ENCODE measurements at regions of chr11 and their contacts with region 1.

Region 1: GRCh38 chr11:65888163-65888814 is at the start of gene FIBP:
- DNase-seq: peak; percentile 83
- ATAC-seq: peak; percentile 69
- H3K4me3 ChIP-seq: peak within 1 kb of the TSS; percentile 90
- H3K27ac ChIP-seq: peak within 1 kb of the TSS; percentile 84
- H3K4me1 ChIP-seq: peaks cover 29% of the 10 kb centered on the region
- H3K27me3 ChIP-seq: no peaks in the 10 kb centered on the region
- CTCF ChIP-seq: peak; percentile 78 to 84 (median 80)
- EP300 ChIP-seq: peak in 1 of 2 experiments; percentile 46; a peak in 1 of 4 replicates
- POLR2A ChIP-seq: peak; percentile 96
- RAD21 ChIP-seq: peak; percentile 45
- polyA plus RNA-seq, gene FIBP: 65.1 to 80.7 TPM

Region 2: DNA sequence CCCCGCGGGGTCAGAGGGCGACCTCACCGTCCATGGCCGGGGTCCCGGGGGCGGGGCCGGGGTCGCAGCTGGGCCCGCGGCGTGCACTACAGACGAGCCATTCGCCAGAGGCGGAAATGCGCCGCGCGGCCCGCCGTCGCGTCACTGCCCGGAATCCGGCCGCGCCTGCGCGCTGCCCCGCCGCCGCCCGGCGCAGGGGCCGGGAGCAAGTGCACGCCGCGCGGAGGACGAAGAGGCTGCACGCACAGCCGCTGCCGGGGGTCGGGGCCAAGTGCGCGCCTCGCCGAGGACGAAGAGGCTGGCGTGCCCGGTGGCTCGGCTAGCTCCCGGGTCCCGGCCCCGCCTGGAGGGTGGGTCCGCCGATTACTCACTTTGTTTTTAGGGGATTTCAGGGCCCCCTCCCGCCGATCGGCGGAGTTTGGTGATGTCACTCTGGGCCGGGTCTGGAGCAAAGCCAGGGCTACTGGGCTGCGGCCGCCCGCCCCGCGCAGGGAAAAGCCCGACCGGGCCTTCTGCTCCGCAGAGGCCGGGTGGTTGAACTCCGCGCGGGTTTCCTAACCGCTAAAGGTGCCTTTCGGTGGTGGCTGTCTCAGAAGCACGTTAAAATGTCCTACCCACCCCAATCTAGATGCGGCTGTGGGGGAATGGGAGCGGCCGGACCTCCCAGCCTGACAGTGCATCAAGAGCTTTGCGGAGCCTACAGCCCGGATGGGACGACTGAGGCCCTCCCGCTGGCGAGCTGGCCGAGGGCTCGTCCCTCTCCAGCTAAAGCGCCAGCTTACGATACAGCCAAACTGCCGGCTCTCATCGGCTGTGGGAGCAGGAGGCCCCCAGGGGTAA is 225.3 kb before region 1 on chr11 and contains the start of gene RELA:
- CTCF ChIA-PET with region 1: no interaction called
- POLR2A ChIA-PET with region 1: interaction called, 10 read pairs
- RAD21 ChIA-PET with region 1: no interaction called
- SMC1A ChIA-PET with region 1: interaction called, 4 read pairs
- in situ Hi-C with region 1: no loop called
- intact Hi-C with region 1: no loop called
- DNase-seq: no peak
- ATAC-seq: peak; percentile 84
- H3K4me3 ChIP-seq: peak within 1 kb of the TSS; percentile 91
- H3K27ac ChIP-seq: peak within 1 kb of the TSS; percentile 98
- H3K4me1 ChIP-seq: peaks cover 9% of the 10 kb centered on the region
- H3K27me3 ChIP-seq: no peaks in the 10 kb centered on the region
- CTCF ChIP-seq: no peak
- EP300 ChIP-seq: 0 out of 4 replicates have a peak, but pooled peaks of 1 of the 2 experiments have one; percentile 24
- POLR2A ChIP-seq: peak; percentile 79
- RAD21 ChIP-seq: no peak
- polyA plus RNA-seq, gene RELA: 5.1 to 12.8 TPM

Region 3: GRCh38 chr11:65850831-65851811 is 37.2 kb before region 1 on chr11:
- CTCF ChIA-PET with region 1: interaction called, 17 read pairs
- POLR2A ChIA-PET with region 1: no interaction called
- RAD21 ChIA-PET with region 1: interaction called, 4 read pairs
- SMC1A ChIA-PET with region 1: interaction called, 3 read pairs
- in situ Hi-C with region 1: no loop called
- intact Hi-C with region 1: no loop called
- DNase-seq: no peak
- ATAC-seq: peak; percentile 40
- H3K4me3 ChIP-seq: no peak overlapping the region
- H3K27ac ChIP-seq: no peak overlapping the region
- H3K4me1 ChIP-seq: peaks cover 8% of the 10 kb centered on the region
- H3K27me3 ChIP-seq: no peaks in the 10 kb centered on the region
- CTCF ChIP-seq: peak in 2 of 3 experiments; percentile 46 to 64; a peak in 4 of 6 replicates
- EP300 ChIP-seq: no peak
- POLR2A ChIP-seq: peak; percentile 24
- RAD21 ChIP-seq: no peak

Region 4: DNA sequence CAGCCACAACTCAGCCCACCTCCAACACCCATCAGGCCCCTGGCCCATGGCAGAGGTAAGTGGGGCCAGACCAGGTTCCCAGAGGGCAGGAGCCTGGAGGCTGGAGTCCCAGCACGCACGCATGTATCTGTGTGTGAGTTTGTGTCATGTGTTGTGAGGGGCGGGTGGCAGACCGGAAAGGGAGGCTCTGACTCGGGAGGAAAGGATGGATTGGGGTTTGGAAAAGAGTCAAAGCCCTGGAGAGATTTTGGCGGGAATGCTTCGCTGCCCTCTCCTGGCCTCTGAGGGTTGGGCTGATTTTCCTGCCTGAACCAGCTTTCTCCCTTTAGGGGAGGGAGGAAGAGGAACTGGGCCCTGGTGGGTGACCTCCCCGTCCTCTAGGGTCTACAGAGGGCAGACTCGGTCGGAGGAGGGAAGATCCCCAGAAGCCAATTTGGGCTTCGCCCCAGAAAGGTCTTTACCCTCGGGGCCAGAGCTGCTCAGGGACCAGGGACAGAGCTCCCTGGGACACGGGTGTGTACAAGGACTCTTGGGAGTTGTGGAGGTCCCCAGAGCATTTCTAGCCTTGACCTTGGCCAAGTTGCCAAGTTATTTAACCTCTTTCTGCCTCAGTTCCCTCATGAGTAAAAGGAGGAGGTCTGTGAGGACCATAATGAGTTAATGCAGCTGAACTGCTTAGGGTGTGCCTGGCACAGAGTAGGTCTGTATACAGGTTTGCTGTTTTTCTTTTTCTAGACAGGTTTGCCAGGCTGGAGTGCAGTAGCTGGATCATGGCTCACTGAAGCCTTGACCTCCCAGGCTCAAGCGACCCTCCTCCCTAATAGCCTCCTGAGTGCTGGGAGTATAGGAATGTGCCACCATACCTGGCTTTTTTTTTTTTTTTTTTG is 23.6 kb after region 1 on chr11:
- CTCF ChIA-PET with region 1: interaction called, 89 read pairs
- POLR2A ChIA-PET with region 1: interaction called, 34 read pairs
- RAD21 ChIA-PET with region 1: interaction called, 18 read pairs
- SMC1A ChIA-PET with region 1: interaction called, 24 read pairs
- in situ Hi-C with region 1: no loop called
- intact Hi-C with region 1: no loop called
- DNase-seq: no peak
- ATAC-seq: peak; percentile 63
- H3K4me3 ChIP-seq: no peak overlapping the region
- H3K27ac ChIP-seq: peak overlapping the region; percentile 38; the same call in 1 of the 2 replicates
- H3K4me1 ChIP-seq: peaks cover 32% of the 10 kb centered on the region
- H3K27me3 ChIP-seq: no peaks in the 10 kb centered on the region
- CTCF ChIP-seq: peak in 2 of 3 experiments; percentile 26 to 37; a peak in 3 of 6 replicates
- EP300 ChIP-seq: no peak
- POLR2A ChIP-seq: no peak
- RAD21 ChIP-seq: no peak

Region 5: DNA sequence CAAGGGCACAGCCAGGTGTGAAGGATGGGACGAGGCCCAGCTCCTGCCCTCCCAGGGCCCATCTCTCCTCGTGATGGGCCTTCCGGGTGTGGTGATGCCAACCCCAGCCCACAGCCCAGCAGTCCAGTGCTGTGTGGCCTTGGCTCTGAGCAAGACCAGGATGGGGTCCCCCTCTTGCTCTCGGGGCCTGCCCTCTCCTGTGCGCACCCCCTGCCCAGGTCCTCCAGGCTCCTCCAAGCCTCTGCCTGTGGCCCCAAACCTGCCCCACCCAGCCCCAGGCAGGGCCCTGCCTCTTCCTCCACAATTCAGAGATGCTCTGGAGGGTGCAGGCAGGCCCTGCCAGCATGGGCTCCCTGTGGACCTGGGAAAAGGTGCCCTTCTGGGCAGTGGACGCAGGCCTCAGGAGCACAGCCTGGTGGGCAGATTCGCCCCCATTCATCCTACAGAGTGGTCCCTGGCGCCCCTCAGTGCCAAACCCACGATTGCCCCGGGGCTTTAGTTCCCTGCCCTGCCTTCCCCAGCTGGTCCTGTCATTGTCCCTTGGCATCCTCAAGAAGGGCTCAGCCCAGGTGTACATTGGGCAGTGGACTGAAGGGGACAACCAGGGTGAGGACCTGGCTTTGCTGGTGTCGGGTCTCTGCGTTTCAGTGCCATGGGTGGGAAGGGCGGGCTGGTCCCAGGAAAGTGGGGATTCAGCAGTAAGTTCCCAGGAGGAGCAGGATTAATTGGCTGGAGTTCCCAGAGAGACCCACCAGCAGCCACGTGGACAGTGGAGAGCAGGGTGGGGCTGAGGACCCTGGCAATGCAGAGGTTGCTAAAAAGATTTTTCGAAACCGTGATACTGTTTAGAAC is 93.9 kb after region 1 on chr11:
- CTCF ChIA-PET with region 1: interaction called, 167 read pairs
- POLR2A ChIA-PET with region 1: no interaction called
- RAD21 ChIA-PET with region 1: interaction called, 40 read pairs
- SMC1A ChIA-PET with region 1: interaction called, 28 read pairs
- in situ Hi-C with region 1: loop called (anchors 5 kb)
- intact Hi-C with region 1: no loop called
- DNase-seq: no peak
- ATAC-seq: no peak; the same call in 2 of the 3 replicates
- H3K4me3 ChIP-seq: no peak overlapping the region
- H3K27ac ChIP-seq: no peak overlapping the region
- H3K4me1 ChIP-seq: no peaks in the 10 kb centered on the region
- H3K27me3 ChIP-seq: no peaks in the 10 kb centered on the region
- CTCF ChIP-seq: no peak
- EP300 ChIP-seq: no peak
- POLR2A ChIP-seq: no peak; the same call in 1 of the 2 replicates
- RAD21 ChIP-seq: no peak

Region 6: GRCh38 chr11:66136752-66137123 is 248.4 kb after region 1 on chr11:
- CTCF ChIA-PET with region 1: interaction called, 8 read pairs
- POLR2A ChIA-PET with region 1: interaction called, 4 read pairs
- RAD21 ChIA-PET with region 1: interaction called, 11 read pairs
- SMC1A ChIA-PET with region 1: interaction called, 4 read pairs
- in situ Hi-C with region 1: no loop called
- intact Hi-C with region 1: loop called (anchors 10 kb)
- DNase-seq: no peak
- ATAC-seq: peak; percentile 36
- H3K4me3 ChIP-seq: peak overlapping the region; percentile 42; the same call in 1 of the 2 replicates
- H3K27ac ChIP-seq: peak overlapping the region; percentile 85
- H3K4me1 ChIP-seq: peaks cover 69% of the 10 kb centered on the region
- H3K27me3 ChIP-seq: no peaks in the 10 kb centered on the region
- CTCF ChIP-seq: no peak
- EP300 ChIP-seq: peak in 1 of 2 experiments; percentile 9; a peak in 1 of 4 replicates
- POLR2A ChIP-seq: no peak
- RAD21 ChIP-seq: no peak

Measured in GM12878 (cell line).